PC-3 (cell line): ENCODE measurements at regions of chr9 and their contacts with region 1.

Region 1: DNA sequence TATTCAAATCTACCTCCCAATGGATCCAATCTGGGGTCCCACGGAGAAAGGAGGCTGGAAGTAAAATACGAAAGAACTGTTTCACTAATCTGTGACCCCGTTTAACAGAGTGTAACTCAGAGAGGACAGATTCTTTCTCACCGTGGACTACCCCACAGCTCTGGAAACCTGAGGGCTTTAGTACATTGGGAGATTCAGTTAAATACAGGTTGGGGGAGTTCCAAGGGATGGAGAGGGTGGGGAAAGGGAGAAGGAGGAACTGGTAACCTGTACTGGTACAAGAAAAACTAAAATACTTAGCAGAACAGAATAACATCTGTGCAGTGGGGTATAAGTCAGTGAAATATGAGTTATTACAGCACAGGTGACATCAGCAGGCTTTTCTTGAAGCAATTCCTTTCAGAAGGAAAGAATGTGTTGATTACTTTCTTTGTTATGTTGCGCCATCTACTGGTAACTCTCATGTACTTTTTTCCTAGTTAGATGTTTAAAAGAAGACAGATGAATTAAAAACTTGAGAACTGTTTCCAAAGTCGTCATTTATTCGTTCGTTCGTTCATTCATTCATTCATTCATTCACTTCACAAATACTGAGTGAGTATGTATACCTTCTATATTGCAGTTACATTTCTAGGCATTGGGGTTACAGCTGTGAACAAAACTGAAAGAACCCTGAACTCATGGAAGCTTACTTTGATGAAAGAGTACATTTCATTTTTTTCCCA is 30.0 kb upstream of the STOM start:
- DNase-seq: peak; percentile 79
- ATAC-seq: peak; percentile 53
- H3K4me3 ChIP-seq: no peak overlapping the region
- H3K27ac ChIP-seq: no peak overlapping the region
- H3K4me1 ChIP-seq: no peaks in the 10 kb centered on the region
- H3K27me3 ChIP-seq: no peaks in the 10 kb centered on the region
- CTCF ChIP-seq: peak; percentile 72

Region 2: GRCh38 chr9:121213136-121213806 is 186.8 kb before region 1 on chr9:
- CTCF ChIA-PET with region 1: no interaction called
- POLR2A ChIA-PET with region 1: no interaction called
- intact Hi-C with region 1: loop called (anchors 2 kb)
- DNase-seq: peak; percentile 87
- ATAC-seq: peak; percentile 99
- H3K4me3 ChIP-seq: no peak overlapping the region
- H3K27ac ChIP-seq: no peak overlapping the region
- H3K4me1 ChIP-seq: no peaks in the 10 kb centered on the region
- H3K27me3 ChIP-seq: no peaks in the 10 kb centered on the region
- CTCF ChIP-seq: peak; percentile 93

Region 3: DNA sequence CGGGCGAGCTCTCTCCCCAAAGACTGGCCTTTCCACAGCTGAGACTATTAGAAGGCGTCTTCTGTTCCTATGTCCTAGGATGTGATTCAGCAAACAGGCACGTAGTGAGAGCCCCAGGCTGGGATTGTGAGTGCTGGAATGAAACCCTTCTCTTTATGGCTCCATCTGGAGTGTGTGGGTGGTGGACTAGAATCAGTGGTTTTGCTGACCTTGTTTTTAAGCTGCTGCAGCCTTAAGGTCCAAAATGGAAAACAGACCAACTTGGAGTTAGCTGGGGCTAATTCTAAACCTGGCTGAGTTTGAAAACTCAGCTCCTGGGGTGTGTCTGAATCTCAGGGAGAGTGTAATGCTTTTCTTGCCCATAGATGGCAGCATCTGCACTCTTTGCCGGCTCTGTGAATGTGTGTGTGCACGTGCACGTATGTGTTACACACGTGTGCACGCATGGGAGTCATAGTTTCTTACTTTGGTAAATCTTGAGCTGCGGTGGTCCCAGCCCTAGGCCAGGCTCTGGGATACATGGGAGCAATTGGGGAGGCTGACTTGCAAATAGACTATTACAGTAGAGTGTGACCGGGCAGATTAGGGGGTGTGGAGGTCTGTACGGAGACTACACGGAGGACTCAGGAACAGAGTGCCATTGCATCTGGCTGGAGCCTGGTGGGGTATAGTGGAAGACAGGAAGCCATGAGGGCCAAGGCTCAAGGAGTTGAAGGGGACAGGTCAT is 121.3 kb before region 1 on chr9:
- CTCF ChIA-PET with region 1: interaction called, 3 read pairs
- POLR2A ChIA-PET with region 1: no interaction called
- intact Hi-C with region 1: loop called (anchors 2 kb)
- DNase-seq: peak; percentile 87
- ATAC-seq: peak; percentile 66
- H3K4me3 ChIP-seq: 0 out of 2 replicates have a peak overlapping the region, but pooled peaks have one; percentile 10
- H3K27ac ChIP-seq: peak overlapping the region; percentile 71
- H3K4me1 ChIP-seq: peaks cover 59% of the 10 kb centered on the region
- H3K27me3 ChIP-seq: no peaks in the 10 kb centered on the region
- CTCF ChIP-seq: peak; percentile 79

Region 4: DNA sequence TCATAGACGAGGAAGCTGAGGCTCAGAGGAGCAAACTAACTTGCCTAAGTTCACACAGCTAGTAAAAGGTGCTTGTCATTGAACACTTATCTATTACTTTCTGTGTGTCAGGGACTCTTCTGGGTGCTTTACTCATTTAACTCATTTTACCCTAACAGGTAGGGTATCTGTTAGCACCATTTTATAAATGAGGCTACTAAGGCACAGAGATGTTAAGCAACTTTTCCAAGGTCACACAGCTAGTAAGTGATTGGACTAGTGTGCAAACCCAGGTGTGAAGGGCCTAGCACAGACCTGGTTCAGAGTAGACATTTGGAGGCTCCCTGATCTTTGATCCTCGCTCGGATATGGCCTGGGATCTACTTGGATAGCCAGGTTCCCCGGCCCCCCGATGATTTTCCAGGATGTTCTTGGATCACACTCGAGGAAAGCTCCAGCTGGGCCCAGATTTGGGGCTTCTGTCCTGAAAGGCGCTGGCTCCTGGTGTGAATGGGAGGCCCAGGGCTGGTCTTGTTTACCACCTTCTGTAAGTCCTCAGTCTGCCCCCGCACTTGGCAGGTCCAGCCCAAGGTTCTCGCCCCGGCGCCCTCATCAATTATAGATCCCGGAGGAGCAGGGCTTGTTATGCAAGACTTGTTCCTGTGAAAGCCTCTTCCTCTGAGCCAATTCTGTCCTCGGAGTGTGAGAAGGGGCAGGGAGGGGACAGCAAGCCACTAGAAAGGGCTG is 94.6 kb before region 1 on chr9:
- CTCF ChIA-PET with region 1: no interaction called
- POLR2A ChIA-PET with region 1: no interaction called
- intact Hi-C with region 1: no loop called
- DNase-seq: no peak
- ATAC-seq: no peak
- H3K4me3 ChIP-seq: no peak overlapping the region
- H3K27ac ChIP-seq: no peak overlapping the region
- H3K4me1 ChIP-seq: no peaks in the 10 kb centered on the region
- H3K27me3 ChIP-seq: no peaks in the 10 kb centered on the region
- CTCF ChIP-seq: no peak

Region 5: GRCh38 chr9:121322037-121322775 is 77.8 kb before region 1 on chr9:
- CTCF ChIA-PET with region 1: interaction called, 4 read pairs
- POLR2A ChIA-PET with region 1: no interaction called
- intact Hi-C with region 1: loop called (anchors 2 kb)
- DNase-seq: peak; percentile 94
- ATAC-seq: peak; percentile 75
- H3K4me3 ChIP-seq: peak overlapping the region; percentile 46; the same call in 1 of the 2 replicates
- H3K27ac ChIP-seq: peak overlapping the region; percentile 91
- H3K4me1 ChIP-seq: peaks cover 8% of the 10 kb centered on the region
- H3K27me3 ChIP-seq: no peaks in the 10 kb centered on the region
- CTCF ChIP-seq: no peak